WTC11 (cell line): ENCODE measurements at regions of chr10 and their contacts with region 1.

Region 1: GRCh38 chr10:83166372-83166771 is 972.9 kb upstream of the GHITM start:
- DNase-seq: peak; percentile 64
- ATAC-seq: peak; percentile 99
- H3K4me3 Mint-ChIP-seq: no peak overlapping the region
- H3K27ac Mint-ChIP-seq: no peak overlapping the region
- H3K4me1 Mint-ChIP-seq: peaks cover 25% of the 10 kb centered on the region
- H3K27me3 Mint-ChIP-seq: no peaks in the 10 kb centered on the region
- CTCF ChIP-seq: peak; percentile 48; the same call in 1 of the 2 replicates

Region 2: DNA sequence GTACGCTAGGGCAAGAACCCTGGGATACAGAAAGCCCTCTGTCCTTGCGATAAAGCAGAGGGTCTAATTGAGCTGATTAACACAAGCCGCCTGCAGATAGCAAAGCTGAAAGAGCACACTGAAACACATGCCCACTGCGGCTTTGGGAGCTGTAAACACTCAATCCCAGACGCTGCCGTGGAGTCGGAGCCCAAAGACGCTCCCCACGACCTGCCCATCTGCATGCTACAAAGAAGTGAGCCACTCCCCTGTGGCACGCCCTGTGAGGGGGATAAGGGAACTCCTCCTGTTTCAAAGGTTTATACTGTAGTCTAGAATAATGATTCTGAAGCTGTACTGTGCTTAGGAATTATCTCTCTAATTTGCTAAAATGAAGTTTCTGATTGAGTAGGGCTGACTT is 12.7 kb before region 1 on chr10:
- CTCF ChIA-PET with region 1: interaction called, 13 read pairs
- POLR2A ChIA-PET with region 1: no interaction called
- DNase-seq: no peak
- ATAC-seq: peak; percentile 68
- H3K4me3 Mint-ChIP-seq: no peak overlapping the region
- H3K27ac Mint-ChIP-seq: no peak overlapping the region
- H3K4me1 Mint-ChIP-seq: peaks cover 38% of the 10 kb centered on the region
- H3K27me3 Mint-ChIP-seq: no peaks in the 10 kb centered on the region
- CTCF ChIP-seq: no peak